Activated CD4-positive, alpha-beta T cell treated with anti-CD3 and anti-CD28 coated beads for 36 hours (primary cell): ENCODE measurements at regions of chr6 and their contacts with region 1.

Region 1: DNA sequence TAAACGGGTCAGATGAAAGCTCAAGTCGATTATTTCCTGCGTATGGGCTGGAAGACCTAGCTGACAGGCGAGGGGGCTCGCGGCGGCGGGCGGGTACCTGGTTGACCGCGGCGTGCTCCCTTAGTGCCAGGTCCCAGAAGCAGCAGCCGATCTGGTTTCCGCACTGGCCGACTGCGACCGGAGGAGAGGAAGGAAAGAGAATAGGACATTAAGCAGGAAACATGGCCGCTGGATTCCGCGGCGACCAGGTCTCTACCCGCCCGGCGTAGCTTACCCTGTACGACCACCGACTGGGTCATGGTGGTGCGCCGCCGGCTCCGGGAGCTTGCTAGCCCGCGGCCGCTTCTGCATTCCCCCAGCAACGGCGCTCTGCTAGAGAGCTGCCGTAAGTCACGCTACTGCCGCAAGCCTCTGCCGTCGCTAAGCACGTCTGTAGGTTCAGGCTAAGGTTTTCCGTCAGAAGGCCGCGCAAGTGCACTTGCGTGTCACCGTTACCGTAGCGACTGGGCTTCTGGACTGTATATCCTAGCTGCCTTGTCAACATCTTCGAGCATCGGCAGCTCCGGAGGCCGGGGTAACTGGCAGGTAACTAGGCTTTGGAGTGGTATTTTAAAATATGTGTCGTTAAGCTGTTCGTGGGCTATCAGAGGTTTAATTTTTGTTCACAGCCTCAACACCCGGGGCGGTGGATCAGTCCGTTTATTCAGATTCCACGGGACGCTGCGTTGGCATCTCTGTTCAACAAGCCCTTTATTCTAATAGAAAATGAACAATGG is at the starts of genes FAM229B and TUBE1:
- DNase-seq: peak; percentile 95
- ATAC-seq: peak; percentile 98
- H3K4me3 Mint-ChIP-seq: no peak within 1 kb of the TSS
- H3K27ac Mint-ChIP-seq: no peak within 1 kb of the TSS
- H3K4me1 Mint-ChIP-seq: peaks cover 11% of the 10 kb centered on the region
- H3K27me3 Mint-ChIP-seq: peaks cover 12% of the 10 kb centered on the region
- total RNA-seq, gene FAM229B: 6.4 to 7.3 TPM
- total RNA-seq, gene TUBE1: 41.8 to 44.4 TPM

Region 2: GRCh38 chr6:112153926-112154607 is 66.7 kb after region 1 on chr6:
- CTCF ChIA-PET with region 1: interaction called, 9 read pairs
- POLR2A ChIA-PET with region 1: no interaction called
- intact Hi-C with region 1: loop called (anchors 2 kb)
- DNase-seq: no peak
- ATAC-seq: peak; percentile 85
- H3K4me3 Mint-ChIP-seq: no peak overlapping the region
- H3K27ac Mint-ChIP-seq: peak overlapping the region; percentile 77
- H3K4me1 Mint-ChIP-seq: peaks cover 30% of the 10 kb centered on the region
- H3K27me3 Mint-ChIP-seq: peaks cover 19% of the 10 kb centered on the region

Region 3: GRCh38 chr6:112163295-112164257 is 76.3 kb after region 1 on chr6:
- CTCF ChIA-PET with region 1: interaction called, 101 read pairs
- POLR2A ChIA-PET with region 1: interaction called, 4 read pairs
- intact Hi-C with region 1: loop called (anchors 1 kb)
- DNase-seq: peak; percentile 90
- ATAC-seq: peak; percentile 98
- H3K4me3 Mint-ChIP-seq: peak overlapping the region; percentile 43
- H3K27ac Mint-ChIP-seq: peak overlapping the region; percentile 51
- H3K4me1 Mint-ChIP-seq: peaks cover 16% of the 10 kb centered on the region
- H3K27me3 Mint-ChIP-seq: peaks cover 35% of the 10 kb centered on the region

Region 4: GRCh38 chr6:113970805-113971676 is 1883.7 kb after region 1 on chr6 and contains the start of gene HDAC2:
- CTCF ChIA-PET with region 1: no interaction called
- POLR2A ChIA-PET with region 1: interaction called, 13 read pairs
- intact Hi-C with region 1: loop called in 1 of 2 experiments (anchors 2 kb)
- DNase-seq: peak; percentile 91
- ATAC-seq: peak; percentile 81
- H3K4me3 Mint-ChIP-seq: peak within 1 kb of the TSS; percentile 94
- H3K27ac Mint-ChIP-seq: peak within 1 kb of the TSS; percentile 99
- H3K4me1 Mint-ChIP-seq: peaks cover 36% of the 10 kb centered on the region
- H3K27me3 Mint-ChIP-seq: no peaks in the 10 kb centered on the region
- total RNA-seq, gene HDAC2: 96.0 to 101 TPM